ENCODE measurements at regions of chr3 and their contacts with region 1.

Region 1: GRCh38 chr3:187745201-187746058 is at the start of gene BCL6:
- DNase-seq: peak; percentile 92 to 99
- H3K4me3 ChIP-seq: peak within 1 kb of the TSS; percentile 88
- H3K27ac ChIP-seq: peak within 1 kb of the TSS; percentile 94
- H3K4me1 ChIP-seq: peaks cover 48% of the 10 kb centered on the region
- H3K27me3 ChIP-seq: no peaks in the 10 kb centered on the region
- CTCF ChIP-seq: 0 out of 2 replicates have a peak, but pooled peaks have one; percentile 19
- total RNA-seq, gene BCL6: 37.1 and 42.2 TPM in 2 replicates

Region 2: GRCh38 chr3:187811585-187812250 is 66.3 kb after region 1 on chr3:
- CTCF ChIA-PET with region 1: interaction called, 3 read pairs
- POLR2A ChIA-PET with region 1: no interaction called
- intact Hi-C with region 1: loop called (anchors 2 kb)
- DNase-seq: no peak
- H3K4me3 ChIP-seq: no peak overlapping the region
- H3K27ac ChIP-seq: no peak overlapping the region
- H3K4me1 ChIP-seq: peaks cover 59% of the 10 kb centered on the region
- H3K27me3 ChIP-seq: no peaks in the 10 kb centered on the region
- CTCF ChIP-seq: no peak

Region 3: DNA sequence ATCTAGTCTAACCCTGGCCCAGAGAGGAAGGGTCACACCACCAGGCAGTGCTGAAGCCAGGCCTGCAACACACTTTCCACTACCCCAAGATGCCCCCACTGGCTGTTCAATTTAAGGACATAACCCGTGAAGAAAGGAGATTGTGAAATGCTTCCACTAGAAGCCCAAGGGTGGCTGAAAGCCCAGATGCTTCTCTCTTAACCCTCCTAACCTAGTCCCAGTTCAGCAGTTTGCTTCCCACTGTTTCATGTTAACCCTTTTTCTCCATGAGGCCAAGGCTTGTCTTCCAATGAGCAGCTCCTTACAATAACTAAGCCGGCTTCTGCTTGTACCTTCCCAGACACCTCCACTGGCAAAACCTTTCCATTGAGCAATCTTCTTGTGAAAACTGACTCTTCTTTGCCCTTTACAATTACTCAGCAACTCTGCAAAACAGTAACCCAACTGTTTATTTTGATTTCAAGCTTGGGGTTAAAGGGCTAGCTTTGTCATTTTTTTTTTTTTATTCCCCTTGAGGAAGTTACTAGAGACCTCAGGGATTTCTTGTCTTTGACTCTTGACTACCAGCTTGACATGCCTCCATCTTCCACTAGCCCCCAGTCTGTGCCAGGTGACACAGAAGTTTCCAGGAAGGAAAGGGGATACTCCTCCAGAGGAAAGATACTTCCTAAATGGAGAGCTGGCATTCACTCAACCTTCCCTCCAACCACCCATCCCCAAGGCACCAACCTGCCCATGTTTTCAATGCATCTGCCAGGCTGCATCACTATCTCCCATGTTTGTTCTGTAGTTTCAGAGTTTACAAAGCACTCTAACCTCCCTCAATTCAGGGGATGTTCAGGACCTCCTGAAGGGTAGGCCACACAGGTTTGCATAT is 209.9 kb after region 1 on chr3:
- CTCF ChIA-PET with region 1: interaction called, 8 read pairs
- POLR2A ChIA-PET with region 1: interaction called, 37 read pairs
- intact Hi-C with region 1: loop called (anchors 1 kb)
- DNase-seq: peak; percentile 53 to 98
- H3K4me3 ChIP-seq: peak overlapping the region; percentile 23
- H3K27ac ChIP-seq: peak overlapping the region; percentile 90
- H3K4me1 ChIP-seq: peaks cover 71% of the 10 kb centered on the region
- H3K27me3 ChIP-seq: no peaks in the 10 kb centered on the region
- CTCF ChIP-seq: no peak

Region 4: GRCh38 chr3:188164248-188164687 is 418.8 kb after region 1 on chr3:
- CTCF ChIA-PET with region 1: interaction called, 4 read pairs
- POLR2A ChIA-PET with region 1: interaction called, 6 read pairs
- intact Hi-C with region 1: loop called (anchors 1 kb)
- DNase-seq: peak; percentile 91 to 100
- H3K4me3 ChIP-seq: peak overlapping the region; percentile 16; the same call in 1 of the 2 replicates
- H3K27ac ChIP-seq: peak overlapping the region; percentile 91
- H3K4me1 ChIP-seq: peaks cover 65% of the 10 kb centered on the region
- H3K27me3 ChIP-seq: no peaks in the 10 kb centered on the region
- CTCF ChIP-seq: no peak; the same call in 1 of the 2 replicates

Region 5: DNA sequence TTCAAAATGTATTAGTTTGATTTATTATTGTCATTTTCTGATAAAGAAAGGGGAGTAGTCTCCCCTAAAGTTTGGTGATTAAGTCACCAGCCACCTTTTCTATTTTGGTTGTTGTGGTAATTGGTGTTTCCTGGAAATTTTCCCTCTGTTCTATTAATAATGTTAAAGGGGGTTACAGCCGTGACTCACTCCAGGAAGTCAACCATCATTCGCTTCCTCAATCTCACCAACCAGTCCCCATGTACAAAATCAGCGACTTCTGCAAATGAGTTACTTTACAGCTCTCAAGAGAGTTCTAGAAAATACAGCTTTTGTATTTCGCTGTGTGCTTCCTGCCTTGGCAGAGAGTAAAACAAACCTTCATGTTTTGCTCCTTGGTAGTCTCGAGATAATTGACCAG is 693.6 kb after region 1 on chr3:
- CTCF ChIA-PET with region 1: no interaction called
- POLR2A ChIA-PET with region 1: no interaction called
- intact Hi-C with region 1: loop called (anchors 10 kb)
- DNase-seq: no peak
- H3K4me3 ChIP-seq: no peak overlapping the region
- H3K27ac ChIP-seq: no peak overlapping the region
- H3K4me1 ChIP-seq: no peaks in the 10 kb centered on the region
- H3K27me3 ChIP-seq: no peaks in the 10 kb centered on the region
- CTCF ChIP-seq: no peak

Region 6: GRCh38 chr3:188749010-188749617 is 1003.7 kb after region 1 on chr3:
- CTCF ChIA-PET with region 1: no interaction called
- POLR2A ChIA-PET with region 1: no interaction called
- intact Hi-C with region 1: loop called (anchors 10 kb)
- DNase-seq: peak in 1 of 2 experiments; percentile 28
- H3K4me3 ChIP-seq: no peak overlapping the region
- H3K27ac ChIP-seq: no peak overlapping the region
- H3K4me1 ChIP-seq: no peaks in the 10 kb centered on the region
- H3K27me3 ChIP-seq: no peaks in the 10 kb centered on the region
- CTCF ChIP-seq: peak; percentile 71